Activated CD4-positive, alpha-beta memory T cell treated with anti-CD3 and anti-CD28 coated beads for 36 hours (primary cell): ENCODE measurements at regions of chr2 and their contacts with region 1.

Region 1: GRCh38 chr2:73176881-73177644 is 25.3 kb upstream of the NOTO start:
- DNase-seq: peak; percentile 91
- H3K4me3 Mint-ChIP-seq: peak overlapping the region; percentile 77
- H3K27ac Mint-ChIP-seq: no peak overlapping the region
- H3K4me1 Mint-ChIP-seq: peaks cover 26% of the 10 kb centered on the region
- H3K27me3 Mint-ChIP-seq: peaks cover 31% of the 10 kb centered on the region

Region 2: DNA sequence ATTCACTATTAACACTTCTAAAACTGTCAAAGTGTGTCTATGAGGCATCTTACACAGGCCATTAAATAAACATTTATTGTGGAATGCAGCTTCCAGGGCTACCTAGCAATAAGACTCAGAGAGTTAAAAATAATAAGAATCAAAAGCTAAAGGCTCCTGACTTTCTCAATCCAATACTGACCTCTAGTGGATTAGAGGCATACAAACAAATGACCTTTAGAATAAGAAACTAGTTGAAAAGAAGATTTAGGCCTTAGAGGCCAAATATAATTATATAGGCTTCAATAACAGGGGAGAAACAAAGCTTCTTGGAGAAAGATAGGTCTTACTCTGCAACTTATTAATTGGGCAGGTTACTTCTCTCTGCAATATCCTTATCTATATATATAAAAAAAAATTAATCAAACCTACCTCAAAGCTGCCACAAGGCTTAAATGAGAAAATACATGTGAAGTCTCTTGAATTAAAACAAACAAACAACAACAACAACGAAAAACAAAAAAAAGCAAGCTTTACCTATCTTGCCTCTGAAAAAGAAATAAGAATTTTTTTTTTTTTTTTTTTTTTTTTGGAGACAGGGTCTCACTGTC is 597.4 kb before region 1 on chr2:
- CTCF ChIA-PET with region 1: no interaction called
- POLR2A ChIA-PET with region 1: no interaction called
- intact Hi-C with region 1: no loop called
- DNase-seq: no peak
- H3K4me3 Mint-ChIP-seq: no peak overlapping the region
- H3K27ac Mint-ChIP-seq: no peak overlapping the region
- H3K4me1 Mint-ChIP-seq: peaks cover 3% of the 10 kb centered on the region
- H3K27me3 Mint-ChIP-seq: no peaks in the 10 kb centered on the region

Region 3: GRCh38 chr2:72713857-72714256 is 463.2 kb before region 1 on chr2:
- CTCF ChIA-PET with region 1: no interaction called
- POLR2A ChIA-PET with region 1: no interaction called
- intact Hi-C with region 1: no loop called
- DNase-seq: no peak
- H3K4me3 Mint-ChIP-seq: no peak overlapping the region
- H3K27ac Mint-ChIP-seq: no peak overlapping the region
- H3K4me1 Mint-ChIP-seq: no peaks in the 10 kb centered on the region
- H3K27me3 Mint-ChIP-seq: no peaks in the 10 kb centered on the region

Region 4: DNA sequence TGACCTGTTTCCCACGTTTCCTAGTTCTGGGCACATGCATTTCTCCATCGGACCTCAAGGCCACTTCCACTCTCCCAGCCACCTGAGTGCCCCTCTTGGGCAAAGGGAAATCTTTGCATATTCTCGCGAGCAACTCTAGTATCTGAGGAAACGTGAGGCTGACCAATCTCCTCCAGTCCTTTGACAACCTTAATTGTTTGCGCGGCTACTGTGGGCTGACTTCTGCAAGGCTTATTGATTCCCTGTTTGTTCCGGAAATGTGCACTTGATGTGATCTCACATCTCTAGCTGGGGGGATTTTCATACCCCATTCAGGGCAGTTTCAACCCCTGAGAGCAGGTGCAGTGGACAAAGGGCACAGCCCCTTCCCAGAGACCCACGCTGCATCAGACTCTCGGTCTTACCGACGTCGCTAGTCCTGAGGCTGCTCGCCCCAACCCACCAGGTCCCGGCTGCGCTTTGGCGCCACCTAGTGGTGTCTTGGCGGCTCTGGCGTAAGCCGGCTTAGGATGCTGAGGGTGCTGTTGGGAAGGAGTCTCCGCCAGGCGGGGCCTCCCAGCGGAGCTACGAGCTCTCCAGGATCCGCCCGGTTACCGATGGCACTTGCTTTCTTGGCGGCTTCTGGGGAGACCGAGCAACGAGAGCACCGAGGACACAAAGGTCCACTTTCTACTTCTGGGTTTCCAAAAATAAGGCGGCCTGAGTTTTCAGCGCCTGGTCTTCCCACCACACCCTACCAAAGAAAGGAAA is 314.6 kb before region 1 on chr2:
- CTCF ChIA-PET with region 1: interaction called, 23 read pairs
- POLR2A ChIA-PET with region 1: no interaction called
- intact Hi-C with region 1: no loop called
- DNase-seq: peak; percentile 92
- H3K4me3 Mint-ChIP-seq: peak overlapping the region; percentile 21
- H3K27ac Mint-ChIP-seq: no peak overlapping the region
- H3K4me1 Mint-ChIP-seq: peaks cover 9% of the 10 kb centered on the region
- H3K27me3 Mint-ChIP-seq: peaks cover 50% of the 10 kb centered on the region

Region 5: GRCh38 chr2:72973566-72974435 is 203.3 kb before region 1 on chr2:
- CTCF ChIA-PET with region 1: interaction called, 19 read pairs
- POLR2A ChIA-PET with region 1: no interaction called
- intact Hi-C with region 1: loop called (anchors 5 kb)
- DNase-seq: peak; percentile 50
- H3K4me3 Mint-ChIP-seq: no peak overlapping the region
- H3K27ac Mint-ChIP-seq: no peak overlapping the region
- H3K4me1 Mint-ChIP-seq: no peaks in the 10 kb centered on the region
- H3K27me3 Mint-ChIP-seq: no peaks in the 10 kb centered on the region

Region 6: GRCh38 chr2:73043276-73043675 is 133.8 kb before region 1 on chr2:
- CTCF ChIA-PET with region 1: no interaction called
- POLR2A ChIA-PET with region 1: no interaction called
- intact Hi-C with region 1: no loop called
- DNase-seq: no peak
- H3K4me3 Mint-ChIP-seq: no peak overlapping the region
- H3K27ac Mint-ChIP-seq: no peak overlapping the region
- H3K4me1 Mint-ChIP-seq: no peaks in the 10 kb centered on the region
- H3K27me3 Mint-ChIP-seq: no peaks in the 10 kb centered on the region

Region 7: DNA sequence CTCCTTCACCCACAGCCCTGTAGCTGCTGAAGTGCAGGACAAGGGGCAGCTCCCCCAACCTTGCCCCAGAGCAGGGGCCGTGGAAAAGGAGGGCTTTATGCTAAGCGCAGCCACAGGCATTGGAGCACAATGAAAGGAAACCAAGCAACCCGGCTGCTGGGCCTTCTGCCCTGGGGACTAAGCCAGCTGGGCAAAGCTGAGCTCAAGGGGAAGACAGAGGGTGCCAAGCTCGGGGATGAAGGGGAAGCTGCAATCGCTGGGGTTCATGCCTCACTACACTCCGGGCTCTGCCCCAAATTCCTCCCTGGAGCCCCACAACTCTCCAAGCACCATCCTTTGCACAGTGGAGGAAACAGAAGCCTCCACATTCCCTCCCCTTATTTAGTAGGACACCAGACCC is 118.0 kb before region 1 on chr2:
- CTCF ChIA-PET with region 1: interaction called, 11 read pairs
- POLR2A ChIA-PET with region 1: no interaction called
- intact Hi-C with region 1: no loop called
- DNase-seq: no peak
- H3K4me3 Mint-ChIP-seq: no peak overlapping the region
- H3K27ac Mint-ChIP-seq: no peak overlapping the region
- H3K4me1 Mint-ChIP-seq: peaks cover 13% of the 10 kb centered on the region
- H3K27me3 Mint-ChIP-seq: no peaks in the 10 kb centered on the region

Region 8: GRCh38 chr2:73085691-73086360 is 91.2 kb before region 1 on chr2:
- CTCF ChIA-PET with region 1: interaction called, 118 read pairs
- POLR2A ChIA-PET with region 1: no interaction called
- intact Hi-C with region 1: loop called (anchors 1 kb)
- DNase-seq: peak; percentile 88
- H3K4me3 Mint-ChIP-seq: no peak overlapping the region
- H3K27ac Mint-ChIP-seq: no peak overlapping the region
- H3K4me1 Mint-ChIP-seq: no peaks in the 10 kb centered on the region
- H3K27me3 Mint-ChIP-seq: no peaks in the 10 kb centered on the region

Region 9: GRCh38 chr2:73187549-73187948 is 10.5 kb after region 1 on chr2:
- CTCF ChIA-PET with region 1: interaction called, 10 read pairs
- POLR2A ChIA-PET with region 1: no interaction called
- intact Hi-C with region 1: no loop called
- DNase-seq: no peak
- H3K4me3 Mint-ChIP-seq: no peak overlapping the region
- H3K27ac Mint-ChIP-seq: no peak overlapping the region
- H3K4me1 Mint-ChIP-seq: no peaks in the 10 kb centered on the region
- H3K27me3 Mint-ChIP-seq: peaks cover 5% of the 10 kb centered on the region

Region 10: GRCh38 chr2:73233154-73233931 is 56.3 kb after region 1 on chr2 and contains the start of gene PRADC1:
- CTCF ChIA-PET with region 1: interaction called, 7 read pairs
- POLR2A ChIA-PET with region 1: interaction called, 4 read pairs
- intact Hi-C with region 1: loop called (anchors 1 kb)
- DNase-seq: peak; percentile 97
- H3K4me3 Mint-ChIP-seq: peak within 1 kb of the TSS; percentile 87
- H3K27ac Mint-ChIP-seq: peak within 1 kb of the TSS; percentile 80
- H3K4me1 Mint-ChIP-seq: peaks cover 29% of the 10 kb centered on the region
- H3K27me3 Mint-ChIP-seq: peaks cover 1% of the 10 kb centered on the region
- total RNA-seq, gene PRADC1: 12.9 to 13.6 TPM

Region 11: GRCh38 chr2:73408198-73408597 is 231.1 kb after region 1 on chr2:
- CTCF ChIA-PET with region 1: no interaction called
- POLR2A ChIA-PET with region 1: no interaction called
- intact Hi-C with region 1: no loop called
- DNase-seq: no peak
- H3K4me3 Mint-ChIP-seq: no peak overlapping the region
- H3K27ac Mint-ChIP-seq: no peak overlapping the region
- H3K4me1 Mint-ChIP-seq: peaks cover 6% of the 10 kb centered on the region
- H3K27me3 Mint-ChIP-seq: no peaks in the 10 kb centered on the region